Right lobe of liver (tissue), 6 donors: ENCODE measurements at regions of chr18 and their contacts with region 1.

Region 1: DNA sequence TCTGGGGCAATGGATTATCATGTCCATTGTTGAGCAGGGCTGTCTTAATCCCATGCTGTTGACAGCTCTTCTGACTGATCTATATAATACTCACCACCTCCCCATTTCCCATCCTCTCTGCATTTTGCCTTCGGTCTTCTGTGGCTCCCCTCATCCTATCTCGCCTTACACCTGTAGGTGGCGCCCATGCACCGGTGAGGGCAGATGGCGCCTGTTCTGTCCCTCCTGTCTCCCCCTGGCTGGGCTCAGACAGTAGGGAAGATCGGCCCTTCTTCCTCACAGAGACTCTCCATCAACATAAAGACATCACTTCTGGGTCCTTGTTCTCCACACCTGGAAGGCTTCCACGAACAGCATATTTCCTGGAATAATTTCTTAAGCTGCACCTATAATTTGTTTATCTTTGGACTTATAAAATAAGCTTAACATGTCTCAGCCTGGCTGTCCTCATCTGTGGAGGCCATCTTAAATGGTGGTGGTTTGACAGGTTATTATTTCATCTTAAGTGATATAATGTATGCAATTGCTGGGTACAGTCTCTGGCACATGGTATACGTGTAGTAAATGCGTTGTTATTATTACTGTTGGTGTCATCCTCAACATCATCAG is 10.9 kb upstream of the CDH20 start:
- DNase-seq: peak; percentile 53 to 55 (median 55)
- ATAC-seq: peak; percentile 82 to 92 (median 86)
- H3K4me3 ChIP-seq: no peak overlapping the region
- H3K27ac ChIP-seq: no peak overlapping the region
- H3K4me1 ChIP-seq: no peaks in the 10 kb centered on the region
- H3K27me3 ChIP-seq: no peaks in the 10 kb centered on the region
- CTCF ChIP-seq: peak; percentile 54 to 70 (median 67)
- POLR2A ChIP-seq: no peak

Region 2: DNA sequence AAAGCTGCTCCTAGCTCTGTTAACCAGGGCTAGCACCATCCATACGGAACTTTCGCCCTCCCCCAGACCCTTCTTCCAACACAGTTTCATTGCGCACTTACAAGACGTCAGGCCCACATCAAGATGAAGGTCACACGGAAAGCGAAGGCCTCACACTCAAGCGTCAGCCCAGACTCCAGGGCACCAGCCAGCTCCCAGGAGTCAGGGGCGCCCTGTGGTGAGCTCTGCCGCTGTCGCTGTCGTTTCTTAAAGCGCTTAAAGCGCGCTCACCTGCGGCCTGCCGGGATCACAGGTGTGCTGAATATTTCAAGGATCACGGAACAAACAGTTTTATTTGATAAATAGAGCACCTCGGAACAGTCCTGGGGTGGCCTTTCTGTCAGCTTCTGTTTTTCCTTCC is 174.0 kb after region 1 on chr18:
- intact Hi-C with region 1: loop called in 1 of 2 experiments (anchors 10 kb)
- DNase-seq: no peak
- ATAC-seq: no peak
- H3K4me3 ChIP-seq: no peak overlapping the region
- H3K27ac ChIP-seq: no peak overlapping the region
- H3K4me1 ChIP-seq: no peaks in the 10 kb centered on the region
- H3K27me3 ChIP-seq: no peaks in the 10 kb centered on the region
- CTCF ChIP-seq: no peak
- POLR2A ChIP-seq: no peak

Region 3: DNA sequence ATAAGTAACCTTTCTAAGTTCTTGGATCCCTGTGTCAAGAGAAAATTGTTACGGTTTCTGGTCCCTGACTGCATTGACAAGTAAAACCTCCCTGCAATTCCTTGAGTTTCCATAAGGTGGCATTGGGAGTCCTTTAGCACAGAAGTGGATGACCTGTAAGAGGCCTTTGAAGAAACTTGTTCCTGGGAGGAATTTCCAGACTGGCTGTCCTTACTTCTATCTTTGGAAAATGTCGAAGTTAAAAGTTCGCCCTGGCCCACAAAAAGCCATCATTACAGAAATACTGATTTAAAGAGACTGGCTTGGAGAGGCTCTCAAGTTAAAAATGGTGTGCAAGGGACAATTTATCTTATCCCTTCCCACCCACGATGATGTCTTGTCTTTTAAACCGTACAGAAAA is 229.2 kb after region 1 on chr18:
- intact Hi-C with region 1: no loop called
- DNase-seq: no peak
- ATAC-seq: peak; percentile 85 to 90 (median 88)
- H3K4me3 ChIP-seq: no peak overlapping the region
- H3K27ac ChIP-seq: no peak overlapping the region
- H3K4me1 ChIP-seq: no peaks in the 10 kb centered on the region
- H3K27me3 ChIP-seq: no peaks in the 10 kb centered on the region
- CTCF ChIP-seq: peak; percentile 79 to 84 (median 80)
- POLR2A ChIP-seq: no peak